ENCODE measurements at regions of chr4 and their contacts with region 1.

Region 1: DNA sequence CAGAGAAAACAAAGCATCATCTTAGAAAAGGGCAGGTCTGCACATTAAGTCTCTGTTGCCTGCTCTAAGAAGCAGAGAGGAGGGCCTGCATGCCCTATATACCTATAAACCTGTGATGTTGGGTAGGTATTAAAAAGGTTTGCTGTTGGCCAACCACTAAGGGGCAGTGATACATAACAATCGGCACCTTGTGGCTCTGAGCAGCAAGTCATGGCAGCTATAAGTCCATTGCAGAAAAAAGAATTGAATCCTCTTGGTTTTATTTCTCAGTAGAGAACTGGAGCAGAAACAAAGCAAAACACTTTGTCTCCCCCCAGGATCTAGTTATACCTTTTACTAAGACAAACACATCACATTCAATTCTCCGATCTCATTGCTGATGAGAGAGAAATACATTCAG is 1364.4 kb downstream of the STIM2 start:
- DNase-seq: no peak
- ATAC-seq: peak; percentile 86
- H3K4me3 ChIP-seq: no peak overlapping the region
- H3K27ac ChIP-seq: no peak overlapping the region
- H3K4me1 ChIP-seq: no peaks in the 10 kb centered on the region
- H3K27me3 ChIP-seq: no peaks in the 10 kb centered on the region
- CTCF ChIP-seq: no peak; a peak in 1 of 6 replicates
- EP300 ChIP-seq: no peak
- POLR2A ChIP-seq: no peak
- RAD21 ChIP-seq: 0 out of 2 replicates have a peak, but pooled peaks have one; percentile 12

Region 2: GRCh38 chr4:27684610-27685011 is 540.4 kb before region 1 on chr4:
- CTCF ChIA-PET with region 1: interaction called, 15 read pairs
- POLR2A ChIA-PET with region 1: no interaction called
- RAD21 ChIA-PET with region 1: interaction called, 9 read pairs
- SMC1A ChIA-PET with region 1: interaction called, 7 read pairs
- in situ Hi-C with region 1: no loop called
- intact Hi-C with region 1: loop called (anchors 10 kb)
- DNase-seq: no peak
- ATAC-seq: peak; percentile 98
- H3K4me3 ChIP-seq: no peak overlapping the region
- H3K27ac ChIP-seq: no peak overlapping the region
- H3K4me1 ChIP-seq: no peaks in the 10 kb centered on the region
- H3K27me3 ChIP-seq: no peaks in the 10 kb centered on the region
- CTCF ChIP-seq: peak; percentile 70 to 79 (median 70)
- EP300 ChIP-seq: no peak
- POLR2A ChIP-seq: no peak
- RAD21 ChIP-seq: peak; percentile 75

Region 3: GRCh38 chr4:28167403-28167802 is 57.6 kb before region 1 on chr4:
- CTCF ChIA-PET with region 1: no interaction called
- POLR2A ChIA-PET with region 1: no interaction called
- RAD21 ChIA-PET with region 1: no interaction called
- SMC1A ChIA-PET with region 1: no interaction called
- in situ Hi-C with region 1: no loop called
- intact Hi-C with region 1: no loop called
- DNase-seq: no peak
- ATAC-seq: no peak
- H3K4me3 ChIP-seq: no peak overlapping the region
- H3K27ac ChIP-seq: no peak overlapping the region
- H3K4me1 ChIP-seq: no peaks in the 10 kb centered on the region
- H3K27me3 ChIP-seq: no peaks in the 10 kb centered on the region
- CTCF ChIP-seq: no peak
- EP300 ChIP-seq: no peak
- POLR2A ChIP-seq: no peak
- RAD21 ChIP-seq: no peak

Region 4: DNA sequence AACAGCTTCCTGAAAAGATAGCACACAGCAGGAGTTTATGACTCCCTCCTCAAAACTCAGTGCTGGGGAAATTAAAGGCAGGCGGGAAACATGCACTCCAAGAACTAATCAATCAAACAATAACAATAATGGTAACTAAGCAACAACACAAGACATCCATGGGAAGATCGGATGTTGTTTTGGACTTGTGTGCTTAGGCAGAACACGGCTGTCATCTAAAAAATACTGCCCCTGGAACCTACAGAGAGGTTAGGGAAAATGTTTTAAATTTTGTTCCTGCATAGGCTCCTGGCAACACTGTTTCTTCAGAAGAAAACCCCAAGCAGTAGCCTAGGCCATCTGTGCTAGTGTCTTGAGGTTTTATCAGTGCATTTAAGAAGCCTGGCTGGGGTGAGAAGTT is 13.8 kb after region 1 on chr4:
- CTCF ChIA-PET with region 1: interaction called, 4 read pairs
- POLR2A ChIA-PET with region 1: interaction called, 3 read pairs
- RAD21 ChIA-PET with region 1: interaction called, 5 read pairs
- SMC1A ChIA-PET with region 1: interaction called, 13 read pairs
- in situ Hi-C with region 1: no loop called
- intact Hi-C with region 1: no loop called
- DNase-seq: no peak
- ATAC-seq: no peak
- H3K4me3 ChIP-seq: no peak overlapping the region
- H3K27ac ChIP-seq: no peak overlapping the region
- H3K4me1 ChIP-seq: no peaks in the 10 kb centered on the region
- H3K27me3 ChIP-seq: no peaks in the 10 kb centered on the region
- CTCF ChIP-seq: no peak
- EP300 ChIP-seq: no peak
- POLR2A ChIP-seq: no peak
- RAD21 ChIP-seq: no peak

Region 5: GRCh38 chr4:28313729-28314693 is 89.0 kb after region 1 on chr4:
- CTCF ChIA-PET with region 1: interaction called, 4 read pairs
- POLR2A ChIA-PET with region 1: no interaction called
- RAD21 ChIA-PET with region 1: interaction called, 13 read pairs
- SMC1A ChIA-PET with region 1: interaction called, 6 read pairs
- in situ Hi-C with region 1: no loop called
- intact Hi-C with region 1: no loop called
- DNase-seq: no peak
- ATAC-seq: no peak
- H3K4me3 ChIP-seq: no peak overlapping the region
- H3K27ac ChIP-seq: no peak overlapping the region
- H3K4me1 ChIP-seq: no peaks in the 10 kb centered on the region
- H3K27me3 ChIP-seq: no peaks in the 10 kb centered on the region
- CTCF ChIP-seq: no peak
- EP300 ChIP-seq: no peak
- POLR2A ChIP-seq: no peak
- RAD21 ChIP-seq: no peak

Region 6: DNA sequence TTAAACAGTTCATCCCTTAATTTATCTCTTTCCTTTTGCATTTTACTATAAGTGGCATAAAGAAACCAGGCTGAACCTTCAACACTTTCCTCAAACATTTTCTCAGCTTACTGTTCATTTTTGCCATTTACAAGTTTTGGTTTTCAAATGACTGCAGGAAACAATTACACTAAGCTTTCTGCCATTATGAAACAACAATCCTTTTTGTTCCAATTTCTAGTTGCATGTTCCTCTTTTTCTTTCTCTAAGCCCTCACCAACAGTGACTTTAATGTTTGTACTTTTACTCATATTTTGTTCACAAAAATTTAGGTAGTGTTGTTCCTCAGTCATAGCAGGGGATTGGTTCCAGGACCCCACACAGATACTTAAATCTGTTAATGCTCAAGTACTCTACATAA is 161.7 kb after region 1 on chr4:
- CTCF ChIA-PET with region 1: interaction called, 4 read pairs
- POLR2A ChIA-PET with region 1: no interaction called
- RAD21 ChIA-PET with region 1: interaction called, 24 read pairs
- SMC1A ChIA-PET with region 1: interaction called, 20 read pairs
- in situ Hi-C with region 1: no loop called
- intact Hi-C with region 1: no loop called
- DNase-seq: no peak
- ATAC-seq: peak; percentile 63
- H3K4me3 ChIP-seq: no peak overlapping the region
- H3K27ac ChIP-seq: no peak overlapping the region
- H3K4me1 ChIP-seq: no peaks in the 10 kb centered on the region
- H3K27me3 ChIP-seq: no peaks in the 10 kb centered on the region
- CTCF ChIP-seq: no peak
- EP300 ChIP-seq: peak in 1 of 2 experiments; percentile 27; a peak in 1 of 4 replicates
- POLR2A ChIP-seq: no peak
- RAD21 ChIP-seq: no peak

Region 7: DNA sequence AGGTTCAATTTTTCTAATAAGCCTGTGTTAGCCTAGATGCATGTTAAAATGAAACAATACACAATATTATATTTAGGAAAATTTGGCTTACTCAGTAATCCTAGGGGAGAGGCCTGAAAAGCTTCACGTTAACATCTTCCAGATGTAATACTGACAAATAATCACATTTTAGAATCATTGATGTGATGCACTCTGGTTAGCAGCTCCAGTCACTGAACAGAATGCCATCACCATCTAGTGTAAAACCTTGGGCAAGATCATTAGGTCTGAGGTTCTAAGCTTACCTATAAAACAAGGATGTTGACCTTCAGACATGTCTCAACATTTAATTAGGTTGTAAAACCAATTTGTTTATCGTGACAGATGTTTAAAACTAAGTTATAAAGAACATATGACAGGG is 340.3 kb after region 1 on chr4:
- CTCF ChIA-PET with region 1: interaction called, 3 read pairs
- POLR2A ChIA-PET with region 1: interaction called, 3 read pairs
- RAD21 ChIA-PET with region 1: interaction called, 4 read pairs
- SMC1A ChIA-PET with region 1: interaction called, 13 read pairs
- in situ Hi-C with region 1: no loop called
- intact Hi-C with region 1: no loop called
- DNase-seq: no peak
- ATAC-seq: no peak
- H3K4me3 ChIP-seq: no peak overlapping the region
- H3K27ac ChIP-seq: no peak overlapping the region
- H3K4me1 ChIP-seq: no peaks in the 10 kb centered on the region
- H3K27me3 ChIP-seq: no peaks in the 10 kb centered on the region
- CTCF ChIP-seq: no peak
- EP300 ChIP-seq: no peak
- POLR2A ChIP-seq: no peak
- RAD21 ChIP-seq: no peak

Region 8: DNA sequence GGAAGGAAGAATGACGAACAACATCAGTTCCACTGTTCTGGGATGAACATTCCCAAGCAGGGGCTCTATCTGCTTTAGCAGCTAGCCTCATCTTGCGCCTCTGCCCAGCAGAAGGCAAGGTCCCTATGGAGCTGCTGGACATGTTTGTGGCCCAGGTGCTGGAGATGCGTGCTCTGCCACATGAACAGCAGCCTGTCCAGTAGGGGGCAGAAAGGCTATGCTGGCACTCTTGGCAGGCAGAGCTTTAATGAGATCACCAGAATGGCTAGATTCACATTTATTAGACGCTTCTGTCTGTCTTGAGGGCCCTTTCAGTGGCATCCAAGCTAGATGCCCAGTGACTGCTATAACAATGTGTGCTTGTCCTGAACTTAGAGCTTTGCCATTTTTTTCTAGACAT is 461.6 kb after region 1 on chr4:
- CTCF ChIA-PET with region 1: interaction called, 36 read pairs
- POLR2A ChIA-PET with region 1: no interaction called
- RAD21 ChIA-PET with region 1: interaction called, 10 read pairs
- SMC1A ChIA-PET with region 1: interaction called, 13 read pairs
- in situ Hi-C with region 1: no loop called
- intact Hi-C with region 1: no loop called
- DNase-seq: no peak
- ATAC-seq: peak; percentile 92
- H3K4me3 ChIP-seq: no peak overlapping the region
- H3K27ac ChIP-seq: no peak overlapping the region
- H3K4me1 ChIP-seq: no peaks in the 10 kb centered on the region
- H3K27me3 ChIP-seq: no peaks in the 10 kb centered on the region
- CTCF ChIP-seq: peak; percentile 37 to 63 (median 39); a peak in 4 of 6 replicates
- EP300 ChIP-seq: no peak
- POLR2A ChIP-seq: no peak
- RAD21 ChIP-seq: no peak